Cardiac septum (tissue), 1 donor: ENCODE measurements at regions of chr2 and their contacts with region 1.

Region 1: GRCh38 chr2:99442837-99443236 is 47.0 kb downstream of the REV1 start:
- DNase-seq: no peak

Region 2: DNA sequence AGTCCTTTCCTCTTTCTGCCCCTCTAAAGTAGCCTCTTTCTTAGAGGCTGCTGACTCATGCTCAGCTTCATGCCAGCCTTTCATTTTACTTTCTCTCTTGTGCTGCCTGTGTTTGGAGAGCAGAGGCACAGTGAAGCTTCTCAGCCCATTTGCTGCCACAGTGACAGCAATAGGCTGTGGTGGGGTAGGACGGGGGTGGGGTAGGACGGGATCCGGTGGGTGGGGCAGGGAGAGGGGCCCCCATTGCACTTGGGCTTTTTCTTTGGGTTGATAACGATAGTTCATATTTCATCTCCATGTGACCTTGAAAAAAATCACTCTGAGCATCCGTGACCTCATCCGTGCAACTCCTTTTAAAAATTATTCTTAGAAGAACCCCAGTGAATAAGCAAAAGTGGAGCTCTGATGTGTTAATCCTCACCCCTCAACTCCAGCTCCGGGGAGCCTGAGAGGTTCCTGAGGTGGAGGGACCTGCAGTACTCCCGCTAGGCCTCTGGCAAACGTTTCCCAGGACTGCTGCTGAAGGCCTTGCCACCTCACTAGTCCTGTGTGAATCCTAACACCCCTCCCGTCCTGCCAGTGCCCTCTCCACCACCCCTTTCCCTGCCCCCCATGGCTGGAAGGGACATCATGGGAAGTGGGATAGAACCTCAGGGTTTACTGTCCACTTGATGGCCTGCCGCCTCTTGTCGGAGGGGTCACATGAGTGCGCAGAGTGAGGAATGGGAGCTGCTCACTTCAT is 927.4 kb before region 1 on chr2:
- intact Hi-C with region 1: no loop called
- DNase-seq: no peak

Region 3: DNA sequence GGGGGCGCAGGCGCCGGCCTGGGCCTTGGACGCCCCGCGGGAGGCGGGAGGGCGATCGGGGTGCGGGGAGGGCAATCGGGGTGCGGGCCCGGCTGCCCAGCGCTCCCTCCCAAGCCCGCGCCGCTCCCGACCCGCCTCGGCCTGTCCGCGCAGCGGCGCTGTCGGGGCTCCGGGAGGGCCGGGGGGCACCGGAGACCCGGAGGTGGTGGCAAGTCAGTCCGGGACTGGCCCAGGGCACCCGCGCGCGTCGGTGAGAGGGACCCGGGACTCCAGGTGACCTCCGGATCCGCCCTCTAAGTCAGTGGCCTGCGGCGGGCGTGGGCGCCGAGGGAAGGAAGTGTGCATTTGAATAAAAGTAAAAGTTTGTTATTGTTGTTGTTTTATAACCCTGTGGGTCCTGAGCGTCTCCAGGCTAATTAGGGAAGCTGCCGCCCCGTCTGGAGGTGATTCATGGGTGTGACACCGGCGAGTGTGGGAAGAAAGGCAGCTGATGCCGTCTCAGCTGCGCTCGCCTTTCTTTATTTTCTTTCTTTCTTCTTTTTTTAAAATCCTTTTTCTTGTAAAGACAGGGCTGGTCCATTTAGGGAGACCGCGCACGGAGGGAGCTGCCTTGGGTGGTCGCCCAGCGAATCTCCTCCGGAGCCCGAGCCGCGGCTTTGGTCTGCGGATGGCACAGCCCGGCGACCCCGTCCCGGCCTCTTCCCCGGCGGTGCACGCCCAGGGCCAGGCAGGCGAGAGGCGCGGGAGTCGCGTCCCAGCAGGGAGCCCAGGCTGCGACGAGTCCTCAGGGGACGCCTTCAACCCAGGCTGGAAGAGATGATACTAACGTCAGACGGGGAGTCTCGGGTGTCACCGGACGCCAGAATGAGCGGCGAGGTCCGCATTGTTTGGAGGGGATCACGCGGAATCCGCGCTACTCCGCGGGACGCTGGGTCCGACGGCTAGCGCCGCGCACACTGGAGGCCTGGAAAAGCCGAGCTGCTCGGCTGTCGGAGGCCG is 506.2 kb before region 1 on chr2:
- intact Hi-C with region 1: no loop called
- DNase-seq: no peak

Region 4: GRCh38 chr2:99377879-99378278 is 65.0 kb before region 1 on chr2:
- intact Hi-C with region 1: no loop called
- DNase-seq: no peak

Region 5: DNA sequence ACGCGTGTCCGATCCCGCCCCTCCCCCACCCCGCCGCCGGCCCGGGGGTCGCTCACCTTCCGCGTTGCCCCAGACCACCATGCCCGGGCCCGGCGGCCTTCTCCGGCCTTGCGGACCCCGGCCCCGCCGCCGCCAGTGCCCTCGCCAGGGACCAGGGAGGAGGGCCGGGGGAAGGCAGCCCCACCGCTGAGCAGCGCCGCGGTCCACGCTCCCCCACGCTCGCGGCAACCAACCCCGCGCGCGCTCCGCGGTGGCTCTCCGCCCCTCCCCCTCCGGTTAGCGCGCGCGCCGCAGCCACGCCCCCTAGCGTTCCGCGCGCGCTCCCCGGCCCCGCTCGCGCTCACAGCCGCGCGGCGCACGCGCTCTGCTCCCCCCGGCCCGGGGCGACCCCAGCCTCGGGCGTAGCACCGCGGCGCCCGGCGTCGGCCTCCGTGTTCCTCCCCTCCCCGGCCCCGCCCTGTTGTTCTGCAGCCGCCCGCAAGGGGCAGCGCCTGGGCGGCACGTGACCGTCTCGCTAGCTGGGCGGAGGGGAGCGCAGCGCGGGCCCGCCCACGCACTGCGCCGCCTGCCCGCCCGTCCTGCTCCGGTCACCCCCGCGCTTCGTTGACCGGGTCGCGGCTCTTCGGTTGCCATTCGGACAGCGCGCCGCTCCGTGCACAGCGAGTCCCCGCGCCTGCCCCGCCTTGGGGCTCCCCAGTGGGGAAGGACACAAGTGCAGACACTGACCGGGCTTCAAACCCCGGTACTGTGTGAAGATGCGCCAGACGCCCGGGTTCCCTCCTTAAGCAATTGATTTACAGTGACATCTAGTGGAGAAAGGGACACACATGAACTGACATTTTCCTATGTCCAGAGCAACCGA is 47.2 kb after region 1 on chr2 and contains the start of gene REV1:
- intact Hi-C with region 1: loop called (anchors 5 kb)
- DNase-seq: peak; percentile 96
- total RNA-seq, gene REV1: 34.1 TPM